ENCODE measurements at regions of chr5 and their contacts with region 1.

Region 1: DNA sequence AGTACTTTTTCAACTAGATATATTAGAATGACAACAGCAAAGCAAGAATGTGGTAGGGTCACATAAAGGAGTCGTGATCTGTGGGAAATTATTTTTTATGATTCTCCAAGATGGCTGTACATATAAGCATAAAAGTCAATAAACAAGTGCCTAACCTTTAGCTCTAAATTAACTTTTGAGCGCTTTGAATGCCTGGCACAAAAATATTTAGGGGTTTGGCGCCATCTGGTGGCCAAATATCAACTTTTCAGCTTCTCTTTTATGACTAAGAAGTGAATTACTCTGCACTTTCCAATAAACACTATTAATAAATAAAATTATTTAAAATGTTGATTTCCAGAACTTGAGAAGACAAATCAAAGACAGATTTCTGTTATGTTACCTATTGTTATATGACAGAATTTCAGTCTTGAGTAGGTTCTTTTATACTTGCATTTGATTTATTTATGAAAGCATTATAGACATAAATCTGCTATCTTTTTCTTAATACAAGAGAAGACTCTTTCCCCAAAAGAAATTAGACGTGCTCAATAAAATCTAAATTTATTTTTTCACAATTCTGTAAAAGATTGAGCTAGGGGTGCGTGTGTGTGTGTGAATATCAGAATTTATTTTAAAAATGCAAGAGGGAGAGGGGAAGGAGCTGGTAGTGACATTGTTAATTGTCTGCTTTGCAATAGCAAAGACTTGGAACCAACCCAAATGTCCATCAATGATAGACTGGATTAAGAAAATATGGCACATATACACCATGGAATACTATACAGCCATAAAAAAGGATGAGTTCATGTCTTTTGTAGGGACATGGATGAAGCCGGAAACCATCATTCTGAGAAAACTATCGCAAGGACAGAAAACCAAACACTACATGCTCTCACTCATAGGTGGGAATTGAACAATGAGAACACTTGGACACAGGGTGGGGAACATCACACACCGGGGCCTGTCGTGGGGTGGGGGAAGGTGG is 36.7 kb upstream of the ARRDC3 start:
- DNase-seq: peak; percentile 77
- H3K4me3 Mint-ChIP-seq: no peak overlapping the region
- H3K27ac Mint-ChIP-seq: no peak overlapping the region
- H3K4me1 Mint-ChIP-seq: peaks cover 31% of the 10 kb centered on the region
- H3K27me3 Mint-ChIP-seq: no peaks in the 10 kb centered on the region
- CTCF ChIP-seq: peak; percentile 79

Region 2: GRCh38 chr5:90709323-90710155 is 710.3 kb before region 1 on chr5:
- CTCF ChIA-PET with region 1: no interaction called
- intact Hi-C with region 1: loop called (anchors 5 kb)
- DNase-seq: peak; percentile 71
- H3K4me3 Mint-ChIP-seq: no peak overlapping the region
- H3K27ac Mint-ChIP-seq: no peak overlapping the region
- H3K4me1 Mint-ChIP-seq: no peaks in the 10 kb centered on the region
- H3K27me3 Mint-ChIP-seq: no peaks in the 10 kb centered on the region
- CTCF ChIP-seq: peak; percentile 57

Region 3: DNA sequence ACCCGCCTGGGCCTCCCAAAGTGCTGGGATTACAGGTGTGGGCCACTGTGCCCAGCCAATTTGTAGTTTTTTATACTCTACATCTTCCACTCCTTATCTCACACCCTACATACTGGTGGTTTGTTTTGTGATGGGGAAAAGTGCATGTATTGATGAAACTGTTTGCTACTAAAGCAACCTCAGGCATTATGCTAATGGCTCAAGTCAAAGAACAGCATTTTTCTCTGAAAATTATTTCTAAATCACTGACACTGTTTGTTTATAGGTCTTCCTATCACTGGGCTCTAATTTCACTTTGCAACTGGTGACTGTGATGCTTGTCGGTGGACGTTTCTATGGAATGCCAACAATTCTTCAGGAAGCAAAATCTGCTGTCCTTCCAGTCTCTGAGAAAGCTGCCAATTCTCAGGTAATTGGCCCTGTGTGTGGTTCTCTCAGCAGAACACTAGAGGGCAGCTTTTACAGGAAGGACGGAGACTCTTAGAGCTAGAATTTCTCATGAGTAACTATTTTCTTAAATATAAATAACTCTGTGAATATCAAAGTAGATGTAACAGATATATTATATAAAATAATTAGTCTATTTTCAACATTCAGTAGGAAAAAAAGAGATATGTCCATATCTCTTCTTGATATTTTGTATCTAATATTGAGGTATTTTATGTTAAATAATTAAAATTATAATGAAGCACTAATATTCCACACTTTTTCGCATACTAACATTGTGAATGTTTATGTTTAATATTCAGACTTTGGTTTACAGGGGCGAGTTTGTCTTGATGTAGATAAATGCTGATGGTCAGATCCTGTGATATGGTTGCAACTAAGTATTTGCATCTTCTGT is 617.2 kb before region 1 on chr5:
- CTCF ChIA-PET with region 1: interaction called, 17 read pairs
- intact Hi-C with region 1: loop called (anchors 2 kb)
- DNase-seq: peak; percentile 58
- H3K4me3 Mint-ChIP-seq: no peak overlapping the region
- H3K27ac Mint-ChIP-seq: no peak overlapping the region
- H3K4me1 Mint-ChIP-seq: no peaks in the 10 kb centered on the region
- H3K27me3 Mint-ChIP-seq: no peaks in the 10 kb centered on the region
- CTCF ChIP-seq: peak; percentile 71

Region 4: GRCh38 chr5:90866333-90866732 is 553.5 kb before region 1 on chr5:
- CTCF ChIA-PET with region 1: interaction called, 11 read pairs
- intact Hi-C with region 1: loop called (anchors 2 kb)
- DNase-seq: no peak
- H3K4me3 Mint-ChIP-seq: no peak overlapping the region
- H3K27ac Mint-ChIP-seq: no peak overlapping the region
- H3K4me1 Mint-ChIP-seq: peaks cover 10% of the 10 kb centered on the region
- H3K27me3 Mint-ChIP-seq: no peaks in the 10 kb centered on the region
- CTCF ChIP-seq: peak; percentile 64

Region 5: DNA sequence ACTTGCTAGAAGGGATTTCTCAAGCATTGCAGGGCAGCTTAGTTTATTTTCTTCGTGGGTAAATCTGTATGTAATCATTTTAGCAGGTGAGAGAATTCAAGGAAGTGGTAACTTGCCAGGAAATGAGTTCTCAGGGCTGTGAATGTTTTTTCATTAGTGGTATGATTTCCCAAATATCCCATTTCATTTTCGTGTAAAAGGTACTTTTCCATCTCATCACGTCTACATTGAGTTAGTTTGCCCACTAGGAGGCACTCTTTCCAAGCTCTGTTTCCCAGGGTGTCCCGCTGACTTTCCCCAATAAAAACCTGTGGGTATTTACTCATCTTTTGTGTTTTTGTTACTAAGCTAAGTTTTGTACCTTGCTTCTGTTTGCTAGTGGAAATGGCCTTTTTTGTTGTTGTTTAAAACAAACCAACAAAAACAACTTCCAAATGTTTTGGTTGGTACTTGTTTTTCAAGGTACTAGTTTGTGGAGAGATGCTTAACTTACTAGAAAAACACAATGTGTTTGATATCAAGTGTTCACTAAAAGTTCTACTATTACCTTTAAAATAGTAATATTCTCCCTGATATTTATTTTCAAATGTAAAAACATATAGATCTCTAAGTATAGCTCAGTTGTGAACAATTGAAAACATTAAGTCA is 487.7 kb before region 1 on chr5:
- CTCF ChIA-PET with region 1: interaction called, 4 read pairs
- intact Hi-C with region 1: loop called (anchors 10 kb)
- DNase-seq: peak; percentile 72
- H3K4me3 Mint-ChIP-seq: no peak overlapping the region
- H3K27ac Mint-ChIP-seq: no peak overlapping the region
- H3K4me1 Mint-ChIP-seq: peaks cover 22% of the 10 kb centered on the region
- H3K27me3 Mint-ChIP-seq: no peaks in the 10 kb centered on the region
- CTCF ChIP-seq: peak; percentile 76

Region 6: GRCh38 chr5:91225848-91226686 is 193.8 kb before region 1 on chr5:
- CTCF ChIA-PET with region 1: interaction called, 4 read pairs
- intact Hi-C with region 1: loop called (anchors 1 kb)
- DNase-seq: peak; percentile 74
- H3K4me3 Mint-ChIP-seq: no peak overlapping the region
- H3K27ac Mint-ChIP-seq: no peak overlapping the region
- H3K4me1 Mint-ChIP-seq: peaks cover 33% of the 10 kb centered on the region
- H3K27me3 Mint-ChIP-seq: no peaks in the 10 kb centered on the region
- CTCF ChIP-seq: peak; percentile 52

Region 7: DNA sequence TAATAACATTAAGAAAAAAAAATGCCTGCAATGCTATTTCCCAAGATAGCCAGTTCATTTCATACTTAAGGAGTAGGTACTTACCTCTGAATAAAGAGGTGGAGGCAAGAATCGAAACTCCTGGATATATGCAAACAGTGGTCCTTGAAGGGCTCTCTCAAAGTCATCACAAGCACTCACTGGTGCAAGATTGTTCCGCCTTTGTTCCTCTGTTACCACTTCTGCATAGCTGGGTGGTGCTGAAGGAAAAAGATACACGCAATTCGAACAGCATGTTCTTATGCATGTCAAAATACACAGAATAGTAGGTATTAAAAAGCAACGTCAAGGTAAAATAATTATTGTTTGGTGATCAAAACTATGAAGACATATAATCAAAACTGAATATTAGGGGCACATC is 46.3 kb before region 1 on chr5:
- CTCF ChIA-PET with region 1: no interaction called
- intact Hi-C with region 1: no loop called
- DNase-seq: no peak
- H3K4me3 Mint-ChIP-seq: no peak overlapping the region
- H3K27ac Mint-ChIP-seq: no peak overlapping the region
- H3K4me1 Mint-ChIP-seq: peaks cover 8% of the 10 kb centered on the region
- H3K27me3 Mint-ChIP-seq: no peaks in the 10 kb centered on the region
- CTCF ChIP-seq: no peak

Region 8: GRCh38 chr5:91486638-91487037 is 66.8 kb after region 1 on chr5:
- CTCF ChIA-PET with region 1: no interaction called
- intact Hi-C with region 1: no loop called
- DNase-seq: no peak
- H3K4me3 Mint-ChIP-seq: no peak overlapping the region
- H3K27ac Mint-ChIP-seq: no peak overlapping the region
- H3K4me1 Mint-ChIP-seq: no peaks in the 10 kb centered on the region
- H3K27me3 Mint-ChIP-seq: no peaks in the 10 kb centered on the region
- CTCF ChIP-seq: no peak

Measured in Calu3 (cell line).